Left ventricle myocardium inferior (tissue), 1 donor: ENCODE measurements at regions of chr1 and their contacts with region 1.

Region 1: GRCh38 chr1:15218287-15219279 is 28.4 kb upstream of the FHAD1 start:
- DNase-seq: no peak
- H3K4me3 ChIP-seq: no peak overlapping the region
- H3K27ac ChIP-seq: peak overlapping the region; percentile 5
- H3K4me1 ChIP-seq: peaks cover 17% of the 10 kb centered on the region
- H3K27me3 ChIP-seq: no peaks in the 10 kb centered on the region
- CTCF ChIP-seq: no peak

Region 2: GRCh38 chr1:15128520-15129313 is 89.9 kb before region 1 on chr1:
- intact Hi-C with region 1: loop called (anchors 10 kb)
- DNase-seq: peak; percentile 68
- H3K4me3 ChIP-seq: no peak overlapping the region
- H3K27ac ChIP-seq: no peak overlapping the region
- H3K4me1 ChIP-seq: no peaks in the 10 kb centered on the region
- H3K27me3 ChIP-seq: peaks cover under 1% of the 10 kb centered on the region
- CTCF ChIP-seq: peak; percentile 92

Region 3: DNA sequence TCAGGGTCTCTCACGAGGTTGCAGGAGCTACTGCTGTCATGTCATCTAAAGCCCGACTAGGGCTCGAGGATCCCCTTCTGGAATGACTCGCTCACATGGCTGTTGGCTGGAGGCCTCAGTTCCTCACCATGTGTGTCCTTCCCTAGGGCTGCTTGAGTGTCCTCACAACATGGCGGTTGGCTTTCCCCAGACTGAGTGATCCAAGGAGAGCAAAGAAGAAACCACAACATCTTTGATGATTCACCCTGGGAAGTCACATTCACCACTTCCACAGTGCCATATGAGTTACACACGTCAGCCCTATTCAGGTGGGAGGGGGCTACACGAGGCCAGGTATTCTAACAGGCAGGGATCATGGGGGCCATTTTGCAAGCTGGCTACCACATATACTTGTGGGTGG is 93.3 kb after region 1 on chr1:
- intact Hi-C with region 1: no loop called
- DNase-seq: no peak
- H3K4me3 ChIP-seq: no peak overlapping the region
- H3K27ac ChIP-seq: no peak overlapping the region
- H3K4me1 ChIP-seq: no peaks in the 10 kb centered on the region
- H3K27me3 ChIP-seq: no peaks in the 10 kb centered on the region
- CTCF ChIP-seq: no peak